Right lobe of liver (tissue), 6 donors: ENCODE measurements at regions of chr10 and their contacts with region 1.

Region 1: GRCh38 chr10:28587970-28588290 is 55.0 kb downstream of the WAC start:
- DNase-seq: no peak
- ATAC-seq: peak; percentile 88 to 95 (median 92)
- H3K4me3 ChIP-seq: no peak overlapping the region
- H3K27ac ChIP-seq: peak overlapping the region in 1 of 3 donors; percentile 41
- H3K4me1 ChIP-seq: peaks cover 0 to 24% (median 10%) of the 10 kb centered on the region in 4 donors
- H3K27me3 ChIP-seq: no peaks in the 10 kb centered on the region
- CTCF ChIP-seq: peak; percentile 20 to 52 (median 38)
- POLR2A ChIP-seq: no peak

Region 2: DNA sequence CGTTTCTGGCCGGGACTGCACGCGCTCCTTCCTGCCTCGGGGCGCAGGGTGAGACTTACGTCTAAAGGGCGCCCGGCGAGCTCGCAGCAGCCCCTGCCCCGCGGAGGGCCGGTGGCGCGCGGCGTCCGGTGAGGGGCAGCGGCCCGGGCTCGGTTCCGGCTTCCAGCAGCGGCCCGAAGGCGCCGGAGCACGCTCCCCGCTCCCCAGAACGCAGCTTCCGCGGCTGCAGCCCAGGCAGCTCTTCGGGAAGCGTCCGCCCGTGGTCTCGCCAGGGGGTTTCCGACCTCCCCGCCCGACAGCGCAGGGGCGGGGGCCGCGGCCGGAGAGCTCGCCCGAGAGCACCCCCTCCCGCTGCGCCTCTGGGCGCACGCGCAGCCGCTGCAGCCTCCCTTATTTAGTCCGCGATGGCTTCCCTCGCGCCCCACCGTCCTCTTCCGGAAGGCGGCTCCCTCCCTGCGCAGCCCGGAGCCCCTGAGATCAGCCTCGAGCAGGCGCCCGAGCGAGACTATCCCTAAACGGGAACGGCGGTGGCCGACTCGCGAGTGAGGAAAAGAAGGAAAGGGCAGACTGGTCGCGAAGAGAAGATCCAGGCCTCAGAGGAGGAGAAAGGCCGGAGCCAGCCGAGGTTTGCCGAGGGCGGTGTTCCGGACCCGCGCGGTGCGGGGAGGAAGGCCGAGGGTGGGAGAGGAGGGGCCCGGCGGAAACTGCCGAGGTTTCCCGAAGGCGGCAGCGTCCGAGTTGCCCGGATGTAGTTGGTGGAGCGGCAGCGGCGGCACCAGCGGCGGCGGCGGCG is 55.4 kb before region 1 on chr10 and contains the start of gene WAC:
- intact Hi-C with region 1: loop called in 1 of 2 experiments (anchors 10 kb)
- DNase-seq: peak; percentile 97 to 98 (median 97)
- ATAC-seq: peak; percentile 91 to 95 (median 93)
- H3K4me3 ChIP-seq: peak within 1 kb of the TSS; percentile 86 to 92 (median 91)
- H3K27ac ChIP-seq: peak within 1 kb of the TSS; percentile 95 to 98 (median 97)
- H3K4me1 ChIP-seq: peaks cover 0 to 15% (median 0%) of the 10 kb centered on the region in 4 donors
- H3K27me3 ChIP-seq: no peaks in the 10 kb centered on the region
- CTCF ChIP-seq: peak in 2 of 4 donors; percentile 10 to 21
- POLR2A ChIP-seq: peak; percentile 93
- total RNA-seq, gene WAC: 34.3 to 52.4 (median 48.9) TPM